A673 (cell line): ENCODE measurements at regions of chr7 and their contacts with region 1.

Region 1: GRCh38 chr7:74656837-74657691 is 454 bp upstream of the GTF2I start:
- DNase-seq: peak; percentile 98
- H3K4me3 ChIP-seq: peak overlapping the region; percentile 100
- H3K27ac ChIP-seq: peak overlapping the region; percentile 100
- H3K4me1 ChIP-seq: peaks cover 19% of the 10 kb centered on the region
- H3K27me3 ChIP-seq: no peaks in the 10 kb centered on the region
- CTCF ChIP-seq: no peak

Region 2: GRCh38 chr7:74324531-74325209 is 332.4 kb before region 1 on chr7:
- CTCF ChIA-PET with region 1: no interaction called
- POLR2A ChIA-PET with region 1: no interaction called
- intact Hi-C with region 1: no loop called
- DNase-seq: no peak
- H3K4me3 ChIP-seq: no peak overlapping the region
- H3K27ac ChIP-seq: no peak overlapping the region
- H3K4me1 ChIP-seq: no peaks in the 10 kb centered on the region
- H3K27me3 ChIP-seq: no peaks in the 10 kb centered on the region
- CTCF ChIP-seq: no peak

Region 3: DNA sequence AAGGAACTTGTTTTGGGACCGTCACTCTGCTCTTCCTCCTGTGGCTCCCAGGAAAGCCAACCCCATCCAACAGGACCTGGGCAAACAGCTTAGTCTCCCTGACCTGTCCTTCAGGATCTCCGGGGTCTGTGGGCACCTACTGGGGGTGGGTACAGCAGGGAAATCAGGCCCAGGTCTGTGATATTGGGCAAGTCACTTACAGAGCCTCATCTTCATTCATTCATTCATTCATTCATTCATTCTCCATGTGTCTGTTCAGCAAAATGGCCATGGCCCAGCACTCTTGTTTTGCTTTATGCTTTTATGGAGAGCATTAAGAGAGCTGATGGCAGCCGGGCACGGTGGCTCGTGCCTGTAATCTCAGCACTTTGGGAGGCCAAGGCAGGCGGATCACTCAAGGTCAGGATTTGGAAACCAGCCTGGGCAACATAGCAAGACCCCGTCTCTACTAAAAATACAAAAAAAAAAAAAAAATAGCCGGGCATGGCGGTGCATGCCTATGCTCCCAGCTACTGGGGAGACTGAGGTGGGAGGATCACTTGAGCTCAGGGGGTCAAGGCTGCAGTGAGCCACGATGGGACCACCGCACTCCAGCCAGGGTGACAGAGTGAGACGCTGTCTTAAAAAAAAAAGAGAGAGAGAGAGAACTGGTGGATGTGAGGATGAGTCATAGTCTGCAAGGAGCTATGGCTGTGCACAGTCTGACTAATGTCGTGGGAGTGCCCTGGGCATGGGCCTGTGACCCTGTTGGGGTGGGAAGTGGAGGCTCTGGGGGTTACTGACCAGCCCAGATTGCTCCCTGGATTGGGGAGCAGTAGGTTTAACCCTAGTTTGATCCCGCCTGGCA is 313.6 kb before region 1 on chr7:
- CTCF ChIA-PET with region 1: no interaction called
- POLR2A ChIA-PET with region 1: no interaction called
- intact Hi-C with region 1: no loop called
- DNase-seq: no peak
- H3K4me3 ChIP-seq: no peak overlapping the region
- H3K27ac ChIP-seq: no peak overlapping the region
- H3K4me1 ChIP-seq: no peaks in the 10 kb centered on the region
- H3K27me3 ChIP-seq: no peaks in the 10 kb centered on the region
- CTCF ChIP-seq: no peak

Region 4: DNA sequence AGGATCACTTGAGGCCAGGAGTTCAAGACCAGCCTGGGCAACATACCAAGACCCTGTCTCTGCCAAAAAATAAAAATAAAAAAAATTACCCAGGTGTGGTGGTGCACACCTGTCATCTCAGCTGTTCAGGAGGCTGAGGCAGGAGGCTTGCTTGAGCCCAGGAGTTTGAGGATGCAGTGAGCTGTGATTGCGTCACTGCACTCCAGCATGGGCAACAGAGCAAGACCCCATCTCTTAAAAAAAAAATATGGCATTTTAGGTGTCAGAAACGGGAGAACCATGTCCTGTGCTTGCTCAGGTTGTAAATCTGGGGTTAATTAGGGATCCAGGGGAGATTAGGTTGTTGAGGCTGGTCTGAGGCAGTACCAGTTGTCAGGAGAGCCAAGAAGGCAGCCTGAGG is 138.4 kb before region 1 on chr7:
- CTCF ChIA-PET with region 1: no interaction called
- POLR2A ChIA-PET with region 1: interaction called, 10 read pairs
- intact Hi-C with region 1: no loop called
- DNase-seq: no peak
- H3K4me3 ChIP-seq: no peak overlapping the region
- H3K27ac ChIP-seq: no peak overlapping the region
- H3K4me1 ChIP-seq: no peaks in the 10 kb centered on the region
- H3K27me3 ChIP-seq: no peaks in the 10 kb centered on the region
- CTCF ChIP-seq: no peak

Region 5: DNA sequence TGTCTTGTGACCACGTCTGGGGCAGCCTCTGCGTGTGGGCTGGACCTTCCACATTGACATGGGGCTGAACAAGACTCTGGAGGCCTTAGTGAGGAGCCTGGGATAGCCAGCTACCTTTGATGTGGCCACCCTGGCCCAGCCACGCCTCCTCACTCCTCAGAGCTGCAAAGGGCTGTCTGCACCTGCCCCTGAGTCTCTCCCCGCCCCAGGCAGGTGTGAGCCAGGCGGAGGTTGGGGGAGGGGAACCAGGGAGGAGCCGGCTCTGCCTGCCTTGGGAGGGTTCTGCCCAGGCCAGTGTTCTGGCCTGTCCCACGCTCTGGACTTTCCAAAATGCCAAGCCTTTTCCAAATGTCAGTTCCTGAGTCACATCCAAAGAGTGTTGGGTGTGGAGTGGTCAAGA is 131.2 kb before region 1 on chr7:
- CTCF ChIA-PET with region 1: no interaction called
- POLR2A ChIA-PET with region 1: interaction called, 13 read pairs
- intact Hi-C with region 1: no loop called
- DNase-seq: no peak
- H3K4me3 ChIP-seq: no peak overlapping the region
- H3K27ac ChIP-seq: no peak overlapping the region
- H3K4me1 ChIP-seq: no peaks in the 10 kb centered on the region
- H3K27me3 ChIP-seq: no peaks in the 10 kb centered on the region
- CTCF ChIP-seq: no peak

Region 6: DNA sequence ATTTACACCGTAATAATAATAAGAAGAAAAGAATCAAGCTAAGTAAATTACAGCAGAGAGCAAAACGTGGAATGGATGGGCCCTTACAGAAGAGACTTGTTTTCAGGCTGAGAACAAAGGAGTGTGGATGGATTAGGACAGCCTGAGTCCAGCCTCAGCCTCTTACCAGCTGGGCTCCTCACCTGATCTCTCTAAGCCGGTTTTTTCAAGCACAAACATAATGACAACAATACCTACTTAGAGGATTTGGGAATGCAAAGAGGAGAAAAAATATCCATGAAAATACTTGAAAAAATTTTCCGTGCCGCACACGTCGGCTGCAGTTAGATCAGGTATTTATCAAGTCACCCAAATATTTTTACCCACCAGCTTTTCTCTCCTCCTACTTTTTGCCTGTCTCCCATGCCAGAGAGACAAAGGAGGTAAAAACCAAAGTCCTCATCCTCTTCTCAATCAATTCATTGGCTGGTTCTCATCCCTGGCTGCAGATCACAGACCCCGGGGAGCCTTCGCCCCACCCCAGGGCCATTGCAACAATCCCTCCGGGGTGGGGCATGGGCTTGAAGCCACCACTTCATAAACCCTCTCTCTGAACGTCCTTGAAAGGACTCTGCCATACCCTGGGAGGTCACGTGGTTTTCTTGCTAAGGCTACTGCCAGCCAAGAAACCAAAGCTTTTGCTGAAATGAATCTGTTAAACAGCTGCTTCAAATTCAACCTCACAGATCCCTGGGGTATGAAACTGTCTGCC is 29.2 kb before region 1 on chr7:
- CTCF ChIA-PET with region 1: no interaction called
- POLR2A ChIA-PET with region 1: no interaction called
- intact Hi-C with region 1: no loop called
- DNase-seq: peak; percentile 71
- H3K4me3 ChIP-seq: no peak overlapping the region
- H3K27ac ChIP-seq: peak overlapping the region; percentile 44
- H3K4me1 ChIP-seq: peaks cover 11% of the 10 kb centered on the region
- H3K27me3 ChIP-seq: no peaks in the 10 kb centered on the region
- CTCF ChIP-seq: no peak

Region 7: DNA sequence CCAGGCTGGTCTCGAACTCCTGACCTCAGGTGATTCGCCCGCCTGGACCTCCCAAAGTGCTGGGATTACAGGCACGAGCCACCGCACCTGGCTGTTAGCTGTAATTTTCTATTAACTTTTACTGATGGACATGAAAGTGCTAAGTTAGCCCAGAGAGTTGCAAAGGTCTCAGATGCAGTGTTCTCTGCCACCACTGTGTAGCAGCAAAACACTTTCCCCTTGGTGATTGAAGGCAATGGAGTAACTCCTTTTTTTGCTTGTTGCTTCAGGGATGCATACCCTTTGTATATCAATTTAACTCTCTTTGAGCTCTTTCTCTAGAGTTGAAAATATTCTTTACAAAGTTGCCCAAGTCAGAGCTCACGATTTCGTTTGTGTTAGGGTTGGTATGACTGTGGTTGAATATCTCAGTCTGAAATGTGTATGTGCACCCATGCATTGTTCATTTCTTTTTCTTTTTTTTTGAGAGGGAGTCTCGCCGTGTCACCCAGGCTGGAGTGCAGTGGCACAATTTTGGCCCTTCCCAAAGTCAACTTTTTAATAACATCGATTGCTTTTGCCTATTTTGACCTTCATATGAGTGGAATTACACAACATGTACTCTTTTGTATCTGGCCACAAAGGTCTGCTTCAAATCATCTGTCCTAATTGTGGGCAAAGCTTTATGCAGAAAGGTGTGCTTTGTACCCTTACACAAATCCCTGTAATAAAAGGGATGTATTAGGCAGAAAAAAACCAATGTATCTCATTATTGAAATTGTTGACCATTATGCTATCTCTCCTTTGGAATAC is 53.0 kb after region 1 on chr7:
- CTCF ChIA-PET with region 1: no interaction called
- POLR2A ChIA-PET with region 1: no interaction called
- intact Hi-C with region 1: loop called (anchors 10 kb)
- DNase-seq: no peak
- H3K4me3 ChIP-seq: no peak overlapping the region
- H3K27ac ChIP-seq: no peak overlapping the region
- H3K4me1 ChIP-seq: no peaks in the 10 kb centered on the region
- H3K27me3 ChIP-seq: no peaks in the 10 kb centered on the region
- CTCF ChIP-seq: 0 out of 2 replicates have a peak, but pooled peaks have one; percentile 16